ENCODE measurements at regions of chr5 and their contacts with region 1.

Region 1: GRCh38 chr5:151686674-151687407 is at the start of gene SPARC:
- DNase-seq: no peak
- ATAC-seq: peak; percentile 92
- H3K4me3 ChIP-seq: peak within 1 kb of the TSS; percentile 50 to 68 (median 65)
- H3K27ac ChIP-seq: no peak within 1 kb of the TSS
- H3K4me1 ChIP-seq: peaks cover 42% of the 10 kb centered on the region
- H3K27me3 ChIP-seq: no peaks in the 10 kb centered on the region
- CTCF ChIP-seq: peak; percentile 19; the same call in 1 of the 2 replicates
- EP300 ChIP-seq: no peak
- POLR2A ChIP-seq: 0 out of 4 replicates have a peak, but pooled peaks of 1 of the 2 experiments have one; percentile 35
- RAD21 ChIP-seq: no peak
- total RNA-seq, gene SPARC: 75.5 and 192 TPM in 2 replicates

Region 2: GRCh38 chr5:151719228-151720000 is 32.6 kb after region 1 on chr5:
- CTCF ChIA-PET with region 1: no interaction called
- POLR2A ChIA-PET with region 1: interaction called, 3 read pairs
- in situ Hi-C with region 1: no loop called
- intact Hi-C with region 1: loop called (anchors 2 kb)
- DNase-seq: peak; percentile 51
- ATAC-seq: peak; percentile 84
- H3K4me3 ChIP-seq: no peak overlapping the region
- H3K27ac ChIP-seq: no peak overlapping the region
- H3K4me1 ChIP-seq: no peaks in the 10 kb centered on the region
- H3K27me3 ChIP-seq: no peaks in the 10 kb centered on the region
- CTCF ChIP-seq: peak; percentile 70
- EP300 ChIP-seq: no peak
- POLR2A ChIP-seq: no peak
- RAD21 ChIP-seq: peak; percentile 52; the same call in 1 of the 2 replicates

Region 3: GRCh38 chr5:151758430-151759241 is 71.8 kb after region 1 on chr5 and contains the start of gene ATOX1:
- CTCF ChIA-PET with region 1: no interaction called
- POLR2A ChIA-PET with region 1: interaction called, 5 read pairs
- in situ Hi-C with region 1: no loop called
- intact Hi-C with region 1: loop called (anchors 5 kb)
- DNase-seq: peak; percentile 85
- ATAC-seq: peak; percentile 91
- H3K4me3 ChIP-seq: peak within 1 kb of the TSS; percentile 69 to 91 (median 82)
- H3K27ac ChIP-seq: peak within 1 kb of the TSS; percentile 68
- H3K4me1 ChIP-seq: peaks cover 54% of the 10 kb centered on the region
- H3K27me3 ChIP-seq: no peaks in the 10 kb centered on the region
- CTCF ChIP-seq: peak; percentile 41
- EP300 ChIP-seq: no peak
- POLR2A ChIP-seq: peak; percentile 82 to 96
- RAD21 ChIP-seq: no peak; the same call in 1 of the 2 replicates
- total RNA-seq, gene ATOX1: 124 and 146 TPM in 2 replicates

Measured in HepG2 (cell line).